WTC11 (cell line): ENCODE measurements at regions of chr16 and their contacts with region 1.

Region 1: GRCh38 chr16:10949370-10949970 is 5.1 kb downstream of the CLEC16A start:
- DNase-seq: peak; percentile 59
- ATAC-seq: peak; percentile 75
- H3K4me3 Mint-ChIP-seq: no peak overlapping the region
- H3K27ac Mint-ChIP-seq: peak overlapping the region; percentile 18
- H3K4me1 Mint-ChIP-seq: peaks cover 61% of the 10 kb centered on the region
- H3K27me3 Mint-ChIP-seq: no peaks in the 10 kb centered on the region
- CTCF ChIP-seq: no peak

Region 2: GRCh38 chr16:10964039-10964890 is 14.8 kb after region 1 on chr16:
- CTCF ChIA-PET with region 1: interaction called, 70 read pairs
- POLR2A ChIA-PET with region 1: no interaction called
- DNase-seq: peak; percentile 85
- ATAC-seq: peak; percentile 91
- H3K4me3 Mint-ChIP-seq: no peak overlapping the region
- H3K27ac Mint-ChIP-seq: no peak overlapping the region
- H3K4me1 Mint-ChIP-seq: peaks cover 4% of the 10 kb centered on the region
- H3K27me3 Mint-ChIP-seq: no peaks in the 10 kb centered on the region
- CTCF ChIP-seq: peak; percentile 96